ENCODE measurements at regions of chr17 and their contacts with region 1.

Region 1: GRCh38 chr17:37373530-37374159 is 2.1 kb upstream of the C17orf78 start:
- DNase-seq: peak; percentile 90
- H3K4me3 ChIP-seq: no peak overlapping the region
- H3K27ac ChIP-seq: no peak overlapping the region
- H3K4me1 ChIP-seq: no peaks in the 10 kb centered on the region
- H3K27me3 ChIP-seq: no peaks in the 10 kb centered on the region
- CTCF ChIP-seq: peak; percentile 94 to 97
- POLR2A ChIP-seq: no peak

Region 2: DNA sequence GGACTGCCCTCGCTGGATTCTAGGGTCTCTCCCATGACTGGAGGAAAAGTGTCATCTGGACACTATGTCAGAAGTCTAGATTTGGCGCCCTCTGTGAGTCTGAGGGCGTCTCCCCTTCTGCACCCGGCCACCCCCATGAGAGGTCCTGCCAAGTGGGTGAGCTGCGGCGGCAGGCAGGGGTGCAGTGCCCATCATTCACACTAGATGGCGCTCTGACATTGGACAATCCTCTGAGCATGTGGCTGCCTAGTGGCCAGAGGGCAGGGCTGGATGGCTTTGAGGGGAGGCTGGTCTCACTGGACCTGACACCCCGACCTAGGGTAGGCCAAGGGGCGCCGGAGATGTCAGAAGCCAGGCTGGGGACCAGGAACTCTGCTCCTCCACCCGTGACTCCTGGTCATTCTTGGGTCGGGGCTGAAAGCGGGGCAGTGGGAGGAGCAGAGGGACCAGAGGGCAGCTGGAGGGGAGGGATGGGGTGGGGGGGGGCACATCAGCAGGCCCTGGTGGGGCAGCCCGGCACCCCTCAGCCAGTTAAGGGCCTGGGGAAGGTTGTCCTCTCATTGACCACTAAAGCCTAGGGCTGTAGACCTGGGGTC is 744.3 kb before region 1 on chr17:
- CTCF ChIA-PET with region 1: interaction called, 16 read pairs
- POLR2A ChIA-PET with region 1: no interaction called
- dilution Hi-C with region 1: no loop called
- intact Hi-C with region 1: loop called (anchors 1 kb)
- DNase-seq: peak; percentile 69
- H3K4me3 ChIP-seq: no peak overlapping the region
- H3K27ac ChIP-seq: no peak overlapping the region
- H3K4me1 ChIP-seq: no peaks in the 10 kb centered on the region
- H3K27me3 ChIP-seq: peaks cover 20 to 24% of the 10 kb centered on the region in 2 experiments
- CTCF ChIP-seq: peak; percentile 92 to 97
- POLR2A ChIP-seq: no peak

Region 3: DNA sequence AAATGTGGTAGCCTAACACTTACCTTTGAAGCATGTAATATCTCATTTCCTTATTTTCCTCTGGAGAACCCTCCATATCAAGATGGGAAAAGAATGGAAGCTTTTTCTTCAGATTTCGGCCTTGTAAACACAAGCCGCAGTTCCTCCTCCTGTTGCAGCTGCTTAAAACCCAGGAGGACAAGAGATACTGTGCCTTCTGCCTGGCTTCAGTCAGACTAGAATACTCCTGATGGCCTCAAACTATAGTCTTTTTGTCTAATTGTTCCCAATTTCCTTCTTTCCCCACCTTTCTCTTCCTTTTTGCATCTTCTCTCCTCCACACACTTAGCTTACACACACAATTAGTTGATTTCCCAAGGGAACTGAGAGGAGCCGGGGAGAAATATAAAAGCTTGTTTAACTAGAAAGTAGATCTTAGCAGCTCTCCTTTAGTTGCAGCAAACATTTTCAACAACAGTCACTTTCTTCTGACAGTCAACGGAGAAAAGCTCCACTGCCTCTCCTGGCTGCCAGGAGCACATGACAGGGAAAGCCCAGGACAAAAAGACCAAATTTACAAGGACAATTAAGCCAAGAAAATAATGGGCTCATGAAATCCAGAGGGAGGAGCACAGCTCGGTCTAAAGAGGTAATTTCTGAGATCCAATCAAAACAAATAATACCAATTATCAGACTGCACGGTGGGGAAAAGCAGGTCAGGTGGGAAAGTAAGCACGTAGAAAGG is 74.2 kb before region 1 on chr17:
- CTCF ChIA-PET with region 1: interaction called, 15 read pairs
- POLR2A ChIA-PET with region 1: no interaction called
- dilution Hi-C with region 1: no loop called
- intact Hi-C with region 1: no loop called
- DNase-seq: peak; percentile 66
- H3K4me3 ChIP-seq: peak overlapping the region in 1 of 3 experiments; percentile 8
- H3K27ac ChIP-seq: peak overlapping the region; percentile 47
- H3K4me1 ChIP-seq: peaks cover 29% of the 10 kb centered on the region
- H3K27me3 ChIP-seq: no peaks in the 10 kb centered on the region
- CTCF ChIP-seq: no peak
- POLR2A ChIP-seq: no peak

Region 4: GRCh38 chr17:37322106-37322505 is 51.5 kb before region 1 on chr17:
- CTCF ChIA-PET with region 1: no interaction called
- POLR2A ChIA-PET with region 1: no interaction called
- dilution Hi-C with region 1: no loop called
- intact Hi-C with region 1: no loop called
- DNase-seq: no peak
- H3K4me3 ChIP-seq: no peak overlapping the region
- H3K27ac ChIP-seq: no peak overlapping the region
- H3K4me1 ChIP-seq: no peaks in the 10 kb centered on the region
- H3K27me3 ChIP-seq: no peaks in the 10 kb centered on the region
- CTCF ChIP-seq: no peak
- POLR2A ChIP-seq: no peak

Region 5: DNA sequence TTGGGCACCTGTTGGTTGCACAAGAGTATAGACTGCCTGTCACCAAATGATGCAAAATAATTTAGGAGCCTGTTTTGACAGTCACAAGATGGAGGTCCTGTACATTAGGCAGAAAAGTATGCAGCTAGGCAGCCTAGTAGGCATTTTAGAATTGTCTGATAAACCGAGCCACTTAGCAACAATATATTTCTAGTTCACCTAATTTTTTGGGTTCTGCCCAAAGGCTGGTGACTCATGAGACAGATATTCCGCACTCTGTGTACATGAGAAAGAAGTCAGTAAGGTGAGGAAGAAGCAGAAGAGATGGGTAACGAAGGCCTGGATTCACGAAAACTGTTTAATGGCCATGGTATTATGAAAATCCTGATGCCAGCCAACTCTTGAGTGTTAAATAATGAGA is 25.8 kb after region 1 on chr17:
- CTCF ChIA-PET with region 1: interaction called, 123 read pairs
- POLR2A ChIA-PET with region 1: no interaction called
- dilution Hi-C with region 1: no loop called
- intact Hi-C with region 1: loop called (anchors 1 kb)
- DNase-seq: no peak
- H3K4me3 ChIP-seq: no peak overlapping the region
- H3K27ac ChIP-seq: no peak overlapping the region
- H3K4me1 ChIP-seq: peaks cover 4% of the 10 kb centered on the region
- H3K27me3 ChIP-seq: no peaks in the 10 kb centered on the region
- CTCF ChIP-seq: no peak
- POLR2A ChIP-seq: no peak

Region 6: GRCh38 chr17:37476431-37477120 is 102.9 kb after region 1 on chr17:
- CTCF ChIA-PET with region 1: interaction called, 11 read pairs
- POLR2A ChIA-PET with region 1: no interaction called
- dilution Hi-C with region 1: no loop called
- intact Hi-C with region 1: no loop called
- DNase-seq: peak; percentile 86
- H3K4me3 ChIP-seq: peak overlapping the region in 1 of 3 experiments; percentile 26
- H3K27ac ChIP-seq: peak overlapping the region; percentile 96
- H3K4me1 ChIP-seq: peaks cover 22% of the 10 kb centered on the region
- H3K27me3 ChIP-seq: no peaks in the 10 kb centered on the region
- CTCF ChIP-seq: no peak
- POLR2A ChIP-seq: no peak

Region 7: GRCh38 chr17:37609170-37610040 is 235.8 kb after region 1 on chr17 and contains the start of gene SYNRG:
- CTCF ChIA-PET with region 1: interaction called, 11 read pairs
- POLR2A ChIA-PET with region 1: no interaction called
- dilution Hi-C with region 1: no loop called
- intact Hi-C with region 1: no loop called
- DNase-seq: peak; percentile 98
- H3K4me3 ChIP-seq: peak within 1 kb of the TSS; percentile 79 to 97 (median 97)
- H3K27ac ChIP-seq: peak within 1 kb of the TSS; percentile 82
- H3K4me1 ChIP-seq: peaks cover 30% of the 10 kb centered on the region
- H3K27me3 ChIP-seq: no peaks in the 10 kb centered on the region
- CTCF ChIP-seq: peak; percentile 12 to 47
- POLR2A ChIP-seq: peak; percentile 92
- total RNA-seq, gene SYNRG: 42.2 and 43.3 TPM in 2 replicates